ENCODE measurements at regions of chr10 and their contacts with region 1.

Region 1: GRCh38 chr10:132654702-132655661 is 117.4 kb downstream of the INPP5A start:
- DNase-seq: peak; percentile 82
- ATAC-seq: peak; percentile 88
- H3K4me3 Mint-ChIP-seq: no peak overlapping the region
- H3K27ac Mint-ChIP-seq: no peak overlapping the region
- H3K4me1 Mint-ChIP-seq: no peaks in the 10 kb centered on the region
- H3K27me3 Mint-ChIP-seq: no peaks in the 10 kb centered on the region
- CTCF ChIP-seq: peak; percentile 91

Region 2: DNA sequence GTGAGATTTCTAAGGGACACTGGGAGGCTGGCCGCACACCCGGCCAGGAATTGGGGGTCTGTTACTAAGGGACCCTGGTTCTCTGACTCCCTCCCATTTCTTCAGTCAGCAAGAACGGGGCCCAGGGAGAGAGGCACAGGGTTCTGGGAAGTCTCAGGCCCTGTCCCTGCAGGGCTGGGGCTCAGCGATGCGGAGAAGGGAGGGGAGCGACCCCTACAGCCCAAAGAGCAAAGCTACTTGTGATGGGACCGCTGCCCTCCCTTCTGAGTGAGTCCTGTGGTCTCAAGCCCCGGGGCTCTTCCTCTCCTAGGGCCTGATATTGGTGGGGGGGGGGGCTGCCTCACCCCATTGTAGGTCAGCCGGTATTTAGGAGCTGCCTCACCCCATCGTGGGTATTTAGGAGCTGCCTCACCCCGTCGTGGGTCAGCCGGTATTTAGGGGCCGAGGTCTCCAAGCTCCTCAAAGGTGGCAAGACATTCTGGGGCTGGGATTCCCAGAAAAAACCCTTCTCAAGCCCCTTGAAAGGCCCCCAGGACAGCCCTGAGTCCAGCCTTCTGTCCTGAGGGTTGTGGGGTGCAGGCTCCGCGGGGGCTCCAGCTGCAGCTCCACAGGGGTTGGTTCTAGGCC is 147.8 kb after region 1 on chr10:
- CTCF ChIA-PET with region 1: interaction called, 16 read pairs
- POLR2A ChIA-PET with region 1: no interaction called
- DNase-seq: no peak
- ATAC-seq: peak; percentile 75
- H3K4me3 Mint-ChIP-seq: no peak overlapping the region
- H3K27ac Mint-ChIP-seq: no peak overlapping the region
- H3K4me1 Mint-ChIP-seq: no peaks in the 10 kb centered on the region
- H3K27me3 Mint-ChIP-seq: no peaks in the 10 kb centered on the region
- CTCF ChIP-seq: no peak

Region 3: DNA sequence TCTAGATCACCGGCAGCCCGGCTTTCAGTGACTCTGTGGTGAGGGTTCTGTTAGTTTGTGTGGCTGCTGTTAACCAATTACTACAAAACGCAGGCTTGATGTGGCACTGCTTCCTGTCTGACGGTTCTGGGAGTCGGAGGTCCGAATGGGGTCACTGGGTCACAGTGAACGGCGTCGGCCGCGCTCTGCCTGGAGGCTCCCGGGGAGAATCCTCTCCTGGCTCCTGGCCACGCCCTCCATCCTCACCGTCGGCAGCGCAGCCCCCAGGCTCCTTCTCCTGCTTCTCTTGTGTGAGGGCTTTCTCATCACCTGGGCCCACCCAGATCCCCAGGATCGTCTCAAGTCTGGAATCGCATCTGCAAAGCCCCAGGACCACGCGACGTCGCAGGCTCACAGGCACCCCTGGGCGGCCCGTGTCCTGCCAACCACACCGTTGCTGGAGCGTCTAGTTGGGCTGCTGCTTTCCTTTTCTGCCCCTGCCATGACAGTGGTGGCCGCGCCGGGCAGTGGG is 162.8 kb after region 1 on chr10:
- CTCF ChIA-PET with region 1: no interaction called
- POLR2A ChIA-PET with region 1: no interaction called
- DNase-seq: no peak
- ATAC-seq: no peak
- H3K4me3 Mint-ChIP-seq: no peak overlapping the region
- H3K27ac Mint-ChIP-seq: no peak overlapping the region
- H3K4me1 Mint-ChIP-seq: no peaks in the 10 kb centered on the region
- H3K27me3 Mint-ChIP-seq: peaks cover 6% of the 10 kb centered on the region
- CTCF ChIP-seq: no peak